AG04449 (cell line): ENCODE measurements at regions of chr9 and their contacts with region 1.

Region 1: GRCh38 chr9:122350638-122351355 is 20.0 kb upstream of the PTGS1 start:
- DNase-seq: no peak
- H3K4me3 ChIP-seq: no peak overlapping the region
- CTCF ChIP-seq: peak; percentile 95

Region 2: GRCh38 chr9:122131401-122132001 is 219.3 kb before region 1 on chr9:
- CTCF ChIA-PET with region 1: interaction called, 831 read pairs
- POLR2A ChIA-PET with region 1: no interaction called
- DNase-seq: no peak
- H3K4me3 ChIP-seq: no peak overlapping the region
- CTCF ChIP-seq: no peak

Region 3: GRCh38 chr9:122338994-122339393 is 11.8 kb before region 1 on chr9:
- CTCF ChIA-PET with region 1: interaction called, 24 read pairs
- POLR2A ChIA-PET with region 1: no interaction called
- DNase-seq: no peak
- H3K4me3 ChIP-seq: no peak overlapping the region
- CTCF ChIP-seq: no peak

Region 4: GRCh38 chr9:122445155-122445749 is 94.5 kb after region 1 on chr9:
- CTCF ChIA-PET with region 1: interaction called, 10 read pairs
- POLR2A ChIA-PET with region 1: no interaction called
- DNase-seq: peak; percentile 47
- H3K4me3 ChIP-seq: no peak overlapping the region
- CTCF ChIP-seq: no peak